ENCODE measurements at regions of chr2 and their contacts with region 1.

Region 1: DNA sequence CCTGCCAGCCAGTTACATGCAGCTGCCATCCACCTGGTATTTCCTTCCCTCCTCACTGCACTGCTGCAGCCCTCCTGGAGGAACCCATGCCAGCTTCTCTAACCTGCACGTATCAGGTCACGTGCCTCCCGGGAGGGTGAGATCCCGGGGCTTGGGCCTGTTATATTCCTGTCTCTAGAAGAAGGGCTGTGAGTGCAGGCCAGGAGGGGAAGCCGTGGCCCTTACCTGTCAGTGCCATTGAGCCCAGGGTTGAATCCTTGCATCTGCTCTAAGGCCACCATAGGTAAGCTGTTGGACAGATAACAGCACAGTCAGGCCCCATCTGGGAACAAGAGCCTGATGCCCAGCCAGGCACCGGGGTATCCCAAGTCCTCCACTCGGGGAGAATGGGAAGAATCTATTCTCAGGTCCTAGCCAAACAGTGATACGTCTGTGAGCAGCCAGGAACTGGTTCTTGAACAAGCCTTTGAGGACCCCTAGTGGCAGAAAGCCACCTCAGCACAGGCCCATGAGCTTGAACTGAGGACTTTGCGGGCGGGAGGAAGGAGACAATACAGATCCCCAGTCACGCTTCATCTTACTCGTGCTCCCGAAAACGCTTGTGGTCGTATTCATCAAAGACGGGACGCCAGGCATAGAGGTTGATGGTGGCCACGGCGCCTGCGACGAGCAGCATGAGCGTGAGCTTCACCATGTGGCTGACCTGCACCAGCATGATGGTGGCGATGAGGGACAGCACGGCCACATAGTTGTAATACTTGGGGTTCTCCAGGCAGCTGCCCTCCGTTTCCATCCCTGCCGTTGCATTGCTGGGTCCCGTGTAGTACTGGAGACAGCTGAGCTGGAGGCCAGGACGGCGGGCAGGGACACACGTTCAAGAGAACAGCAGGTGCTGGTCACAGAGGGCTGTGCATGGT is 34.4 kb downstream of the CENPO start:
- DNase-seq: peak; percentile 71
- H3K4me3 ChIP-seq: no peak overlapping the region
- H3K27ac ChIP-seq: no peak overlapping the region
- H3K4me1 ChIP-seq: peaks cover 19% of the 10 kb centered on the region
- H3K27me3 ChIP-seq: no peaks in the 10 kb centered on the region
- CTCF ChIP-seq: peak; percentile 95

Region 2: DNA sequence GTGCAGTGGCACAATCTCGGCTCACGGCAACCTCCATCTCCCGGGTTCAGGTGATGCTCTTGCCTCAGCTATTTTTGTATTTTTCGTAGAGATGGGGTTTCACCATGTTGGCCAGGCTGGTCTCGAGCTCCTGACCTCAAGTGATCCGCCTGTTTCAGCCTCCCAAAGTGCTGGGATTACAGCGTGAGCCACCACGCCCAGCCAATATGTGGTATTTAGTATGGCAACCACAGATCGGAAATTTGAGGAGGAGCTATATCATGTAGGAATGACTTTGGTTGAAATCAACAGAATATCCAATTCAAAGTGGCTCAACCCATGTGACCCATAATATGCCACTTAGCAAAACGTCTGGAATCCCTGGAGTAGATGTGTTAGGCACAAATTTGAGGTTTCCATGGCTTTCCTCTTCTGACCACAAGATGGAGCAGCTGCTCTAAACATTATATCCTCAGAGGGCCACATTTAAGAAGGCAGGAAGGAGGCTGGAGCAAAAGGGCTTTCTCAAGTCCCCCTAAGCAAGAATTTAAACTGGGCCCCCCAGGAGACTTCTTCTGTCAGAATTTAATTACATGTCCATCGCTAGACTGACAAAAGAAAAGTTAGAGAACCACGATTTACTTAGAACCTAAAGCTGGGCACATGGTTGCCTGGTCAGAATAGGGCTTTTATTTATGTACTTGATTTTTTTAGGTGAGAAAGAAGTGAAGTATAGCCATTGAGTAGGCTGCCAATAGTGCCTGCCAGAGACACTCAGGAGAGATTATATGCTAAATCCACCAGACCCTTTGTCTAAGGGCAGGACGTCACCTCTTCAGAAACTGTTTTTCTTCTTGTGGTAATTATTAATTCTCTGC is 417.7 kb before region 1 on chr2:
- intact Hi-C with region 1: loop called (anchors 5 kb)
- DNase-seq: no peak
- H3K4me3 ChIP-seq: no peak overlapping the region
- H3K27ac ChIP-seq: no peak overlapping the region
- H3K4me1 ChIP-seq: no peaks in the 10 kb centered on the region
- H3K27me3 ChIP-seq: peaks cover 41% of the 10 kb centered on the region
- CTCF ChIP-seq: peak; percentile 90

Measured in left ventricle myocardium inferior (tissue), 1 donor.